Stomach (tissue), 19 donors: ENCODE measurements at regions of chr17 and their contacts with region 1.

Region 1: DNA sequence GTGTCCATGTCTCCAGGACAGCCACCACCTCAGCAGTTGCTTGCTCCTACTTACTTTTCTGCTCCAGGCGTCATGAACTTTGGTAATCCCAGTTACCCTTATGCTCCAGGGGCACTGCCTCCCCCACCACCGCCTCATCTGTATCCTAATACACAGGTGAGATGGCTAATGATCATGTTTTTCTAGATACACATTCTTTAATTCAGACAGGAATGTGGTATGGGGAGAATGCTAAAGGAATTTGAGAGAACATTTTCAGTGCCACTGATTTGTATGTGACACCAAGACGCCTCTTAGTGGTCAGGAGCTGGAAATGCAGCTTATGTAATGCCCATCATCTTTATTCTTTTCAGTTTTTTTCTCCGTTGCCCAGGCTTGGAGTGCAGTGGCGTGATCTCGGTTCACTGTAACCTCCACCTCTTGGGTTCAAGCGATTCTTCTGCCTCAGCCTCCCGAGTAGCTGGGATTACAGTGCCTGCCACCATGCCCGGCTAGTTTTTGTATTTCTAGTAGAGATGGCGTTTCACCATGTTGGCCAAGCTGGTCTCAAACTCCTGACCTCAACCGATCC is 8.9 kb upstream of the RAPGEFL1 start:
- DNase-seq: peak; percentile 49 to 85
- H3K4me3 ChIP-seq: no peak overlapping the region
- H3K27ac ChIP-seq: peak overlapping the region in 4 of 5 donors; percentile 32 to 56 (median 46)
- H3K4me1 ChIP-seq: peaks cover 0 to 20% (median 6%) of the 10 kb centered on the region in 4 donors
- H3K27me3 ChIP-seq: no peaks in the 10 kb centered on the region
- CTCF ChIP-seq: peak in 5 of 7 experiments; percentile 70 to 94 (median 76)
- EP300 ChIP-seq: no peak
- POLR2A ChIP-seq: no peak

Region 2: GRCh38 chr17:40019140-40019991 is 149.0 kb before region 1 on chr17:
- intact Hi-C with region 1: loop called (anchors 10 kb)
- DNase-seq: peak in 1 of 2 donors; percentile 23
- H3K4me3 ChIP-seq: no peak overlapping the region
- H3K27ac ChIP-seq: peak overlapping the region in 4 of 5 donors; percentile 41 to 77 (median 66)
- H3K4me1 ChIP-seq: peaks cover 68 to 94% (median 76%) of the 10 kb centered on the region in 4 donors
- H3K27me3 ChIP-seq: no peaks in the 10 kb centered on the region
- CTCF ChIP-seq: no peak
- EP300 ChIP-seq: no peak
- POLR2A ChIP-seq: no peak

Region 3: GRCh38 chr17:40130352-40131042 is 37.9 kb before region 1 on chr17:
- intact Hi-C with region 1: loop called (anchors 5 kb)
- DNase-seq: peak; percentile 43 to 47
- H3K4me3 ChIP-seq: no peak overlapping the region
- H3K27ac ChIP-seq: peak overlapping the region in 4 of 5 donors; percentile 19 to 75 (median 44)
- H3K4me1 ChIP-seq: peaks cover 2 to 79% (median 18%) of the 10 kb centered on the region in 4 donors
- H3K27me3 ChIP-seq: no peaks in the 10 kb centered on the region
- CTCF ChIP-seq: no peak
- EP300 ChIP-seq: no peak
- POLR2A ChIP-seq: no peak